Brain microvascular endothelial cell (primary cell): ENCODE measurements at regions of chr15 and their contacts with region 1.

Region 1: DNA sequence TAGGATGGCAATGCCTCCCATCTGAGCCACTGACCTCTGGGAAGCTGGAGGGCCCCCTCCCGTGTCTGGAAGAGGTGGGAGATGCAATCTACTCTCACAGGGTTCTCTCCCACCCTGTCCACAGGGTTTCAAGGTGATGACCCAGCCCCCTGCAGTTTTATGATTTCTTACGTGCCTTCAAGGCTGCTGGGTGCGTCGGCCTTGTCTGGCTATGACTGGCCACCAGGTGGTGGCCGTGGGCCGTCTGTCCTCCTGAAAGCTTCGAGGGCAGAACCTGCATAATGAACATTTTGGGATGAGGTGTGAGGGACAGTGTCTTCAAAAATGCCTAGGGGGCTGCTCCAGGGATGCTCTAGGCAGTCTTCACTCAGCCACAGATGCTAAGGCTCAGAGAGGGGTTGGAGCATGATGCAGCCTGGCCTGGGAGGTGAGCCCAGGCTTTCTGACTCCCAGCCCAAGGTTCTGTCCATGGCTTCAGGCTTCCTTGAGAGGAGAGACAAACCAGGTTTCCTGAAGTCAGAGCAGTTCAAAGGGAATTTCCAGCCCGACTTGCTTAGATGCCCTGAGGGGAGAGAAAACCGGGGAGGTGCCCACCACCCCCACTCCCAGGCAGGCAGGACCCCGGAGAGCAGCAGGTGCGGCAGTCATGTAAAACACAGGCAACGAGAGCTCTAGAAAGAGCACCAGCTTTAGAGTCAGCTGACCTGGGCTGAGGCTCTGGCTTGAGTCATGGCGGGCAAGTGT is 18.7 kb downstream of the ISG20 start:
- DNase-seq: no peak
- H3K4me3 ChIP-seq: no peak overlapping the region
- H3K27ac ChIP-seq: no peak overlapping the region
- H3K27me3 ChIP-seq: no peaks in the 10 kb centered on the region
- CTCF ChIP-seq: peak; percentile 95

Region 2: DNA sequence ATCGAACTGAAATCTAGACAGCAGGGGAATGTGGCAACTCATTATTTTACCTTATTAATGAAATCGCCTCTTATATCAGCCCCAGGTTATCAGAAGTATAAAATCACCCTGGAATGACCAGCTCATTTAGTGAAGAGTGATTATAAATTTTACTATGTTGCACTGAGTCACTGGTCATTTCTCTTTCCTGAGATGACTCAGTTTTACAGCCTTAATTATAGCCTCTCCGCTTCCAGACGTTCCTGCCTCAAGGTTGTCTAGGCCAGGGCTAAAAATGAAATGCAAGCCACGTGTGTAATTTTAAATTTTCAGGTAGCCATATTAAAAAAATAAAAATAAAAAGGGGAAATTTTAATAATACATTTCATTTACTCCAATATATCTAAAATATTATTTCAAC is 144.3 kb before region 1 on chr15:
- in situ Hi-C with region 1: no loop called
- DNase-seq: no peak
- H3K4me3 ChIP-seq: no peak overlapping the region
- H3K27ac ChIP-seq: no peak overlapping the region
- H3K27me3 ChIP-seq: no peaks in the 10 kb centered on the region
- CTCF ChIP-seq: no peak

Region 3: DNA sequence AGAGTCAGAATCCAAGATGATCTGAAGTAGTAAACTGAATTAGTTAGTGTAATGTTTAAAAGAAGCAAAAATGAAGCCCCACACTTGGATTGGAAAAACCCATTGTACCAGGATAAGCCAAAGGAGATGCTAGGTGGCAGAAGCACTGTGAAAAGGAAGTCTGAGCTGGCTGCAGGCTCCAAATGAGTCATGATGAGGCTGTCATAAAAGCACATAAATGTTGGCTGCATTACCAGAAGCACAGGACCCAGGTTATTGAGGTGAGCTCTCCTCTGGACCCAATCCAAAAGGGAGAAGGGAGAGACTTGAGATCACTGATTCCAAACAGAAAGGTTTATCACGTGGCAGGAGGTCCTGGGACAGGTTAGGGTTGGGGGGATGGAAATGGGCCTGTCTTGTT is 142.5 kb after region 1 on chr15:
- in situ Hi-C with region 1: loop called (anchors 25 kb)
- DNase-seq: peak; percentile 18
- H3K4me3 ChIP-seq: no peak overlapping the region
- H3K27ac ChIP-seq: no peak overlapping the region
- H3K27me3 ChIP-seq: peaks cover 31% of the 10 kb centered on the region
- CTCF ChIP-seq: no peak